Right lobe of liver (tissue), 6 donors: ENCODE measurements at regions of chr1 and their contacts with region 1.

Region 1: GRCh38 chr1:150925816-150926741 is at the start of gene SETDB1:
- DNase-seq: peak; percentile 94 to 97 (median 96)
- ATAC-seq: peak; percentile 95 to 99 (median 98)
- H3K4me3 ChIP-seq: peak within 1 kb of the TSS; percentile 60 to 69 (median 67)
- H3K27ac ChIP-seq: peak within 1 kb of the TSS; percentile 63 to 77 (median 66)
- H3K4me1 ChIP-seq: peaks cover 0 to 14% (median 3%) of the 10 kb centered on the region in 4 donors
- H3K27me3 ChIP-seq: no peaks in the 10 kb centered on the region
- CTCF ChIP-seq: peak in 1 of 4 donors; percentile 13
- POLR2A ChIP-seq: peak; percentile 28
- total RNA-seq, gene SETDB1: 10.4 to 17.8 (median 12.9) TPM

Region 2: GRCh38 chr1:150730130-150730721 is 195.9 kb before region 1 on chr1:
- intact Hi-C with region 1: no loop called
- DNase-seq: no peak
- ATAC-seq: no peak
- H3K4me3 ChIP-seq: no peak overlapping the region
- H3K27ac ChIP-seq: no peak overlapping the region
- H3K4me1 ChIP-seq: no peaks in the 10 kb centered on the region
- H3K27me3 ChIP-seq: no peaks in the 10 kb centered on the region
- CTCF ChIP-seq: no peak
- POLR2A ChIP-seq: no peak

Region 3: GRCh38 chr1:150748878-150749719 is 177.0 kb before region 1 on chr1:
- intact Hi-C with region 1: no loop called
- DNase-seq: no peak
- ATAC-seq: no peak
- H3K4me3 ChIP-seq: no peak overlapping the region
- H3K27ac ChIP-seq: no peak overlapping the region
- H3K4me1 ChIP-seq: no peaks in the 10 kb centered on the region
- H3K27me3 ChIP-seq: no peaks in the 10 kb centered on the region
- CTCF ChIP-seq: no peak
- POLR2A ChIP-seq: no peak

Region 4: DNA sequence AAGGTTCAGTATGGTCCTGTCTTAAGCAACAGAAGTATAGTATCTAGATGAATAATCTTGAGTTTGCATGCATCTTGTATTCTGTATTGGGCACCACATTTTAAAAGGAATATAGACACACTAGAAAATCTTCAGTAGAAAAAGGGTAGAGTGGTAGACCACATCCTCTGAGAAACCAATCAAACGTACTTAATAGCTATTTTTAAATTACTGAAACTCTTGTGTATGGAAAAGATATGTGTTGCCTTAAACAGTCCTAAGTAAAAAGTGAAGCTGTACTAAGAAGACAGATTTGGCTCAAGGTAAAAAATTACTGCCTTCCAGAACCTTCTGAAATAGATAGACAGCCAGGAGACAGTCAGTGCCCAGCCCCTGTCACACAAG is 36.1 kb before region 1 on chr1:
- intact Hi-C with region 1: no loop called
- DNase-seq: no peak
- ATAC-seq: no peak
- H3K4me3 ChIP-seq: no peak overlapping the region
- H3K27ac ChIP-seq: no peak overlapping the region
- H3K4me1 ChIP-seq: no peaks in the 10 kb centered on the region
- H3K27me3 ChIP-seq: no peaks in the 10 kb centered on the region
- CTCF ChIP-seq: no peak
- POLR2A ChIP-seq: no peak

Region 5: GRCh38 chr1:150995896-150996295 is 69.8 kb after region 1 on chr1:
- intact Hi-C with region 1: loop called in 1 of 2 experiments (anchors 10 kb)
- DNase-seq: peak in 1 of 3 donors; percentile 45
- ATAC-seq: peak; percentile 70 to 83 (median 73)
- H3K4me3 ChIP-seq: no peak overlapping the region
- H3K27ac ChIP-seq: peak overlapping the region in 1 of 3 donors; percentile 5
- H3K4me1 ChIP-seq: no peaks in the 10 kb centered on the region
- H3K27me3 ChIP-seq: no peaks in the 10 kb centered on the region
- CTCF ChIP-seq: peak; percentile 77 to 84 (median 82)
- POLR2A ChIP-seq: no peak